Mammary epithelial cell (primary cell): ENCODE measurements at regions of chr14 and their contacts with region 1.

Region 1: DNA sequence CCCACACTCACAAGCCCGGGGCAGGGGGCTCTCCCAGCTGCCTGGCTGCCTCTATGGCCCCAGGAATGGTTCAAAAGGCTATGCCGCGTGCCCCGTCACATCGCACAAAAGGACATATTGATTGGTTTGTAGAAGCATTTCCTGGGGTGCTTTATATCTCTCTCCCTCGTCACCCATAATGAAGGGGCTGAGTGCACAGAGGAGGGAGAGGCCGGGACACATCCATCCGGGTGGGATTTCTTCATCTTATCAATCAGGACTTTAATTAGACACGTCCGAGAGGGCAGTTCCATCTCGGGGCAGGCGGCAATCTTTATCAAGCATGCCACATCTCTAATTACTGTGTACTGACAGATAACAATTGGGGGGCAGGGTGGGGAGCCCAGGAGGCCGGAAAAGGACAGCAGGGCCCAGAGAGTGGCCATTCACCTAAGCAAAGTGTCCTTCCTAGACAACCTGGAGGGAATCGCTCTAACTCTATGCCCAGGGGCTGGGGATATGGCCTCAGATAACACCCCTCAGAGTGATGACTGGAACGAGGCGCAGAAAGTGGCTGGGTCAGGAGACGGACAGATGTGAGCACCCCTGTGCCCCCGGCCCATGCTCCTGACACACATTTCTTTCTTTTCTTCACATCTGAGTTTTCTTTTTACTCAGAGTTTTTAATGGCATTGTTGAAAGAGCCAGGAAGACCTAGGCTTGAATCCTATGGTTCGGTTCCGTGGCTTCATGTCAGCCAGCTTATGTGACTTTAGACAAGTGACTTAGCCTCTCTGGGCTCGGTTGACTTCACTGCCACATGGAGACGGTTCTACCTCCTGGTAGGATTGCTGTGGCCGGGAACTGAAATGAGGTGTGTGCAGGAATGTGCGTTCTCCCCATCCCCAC is 36.0 kb upstream of the ESRRB start:
- DNase-seq: no peak
- H3K4me3 ChIP-seq: no peak overlapping the region
- H3K27ac ChIP-seq: no peak overlapping the region
- H3K4me1 ChIP-seq: peaks cover 3% of the 10 kb centered on the region
- H3K27me3 ChIP-seq: no peaks in the 10 kb centered on the region
- CTCF ChIP-seq: no peak

Region 2: GRCh38 chr14:76250302-76250701 is 89.7 kb before region 1 on chr14:
- CTCF ChIA-PET with region 1: no interaction called
- dilution Hi-C with region 1: loop called (anchors 5 kb)
- in situ Hi-C with region 1: no loop called
- intact Hi-C with region 1: no loop called
- DNase-seq: no peak
- H3K4me3 ChIP-seq: no peak overlapping the region
- H3K27ac ChIP-seq: no peak overlapping the region
- H3K4me1 ChIP-seq: no peaks in the 10 kb centered on the region
- H3K27me3 ChIP-seq: no peaks in the 10 kb centered on the region
- CTCF ChIP-seq: no peak